ENCODE measurements at regions of chr3 and their contacts with region 1.

Region 1: GRCh38 chr3:61574854-61575253 is 13.5 kb downstream of the PTPRG start:
- DNase-seq: peak in 1 of 2 experiments; percentile 43
- H3K4me3 ChIP-seq: no peak overlapping the region
- H3K27ac ChIP-seq: no peak overlapping the region; the same call in 1 of the 2 replicates
- H3K4me1 ChIP-seq: peaks cover 3 to 44% (median 15%) of the 10 kb centered on the region in 4 experiments; a peak in 6 of 7 replicates
- H3K27me3 ChIP-seq: no peaks in the 10 kb centered on the region
- CTCF ChIP-seq: no peak
- EP300 ChIP-seq: no peak
- POLR2A ChIP-seq: no peak
- RAD21 ChIP-seq: no peak

Region 2: GRCh38 chr3:61589856-61590255 is 15.0 kb after region 1 on chr3:
- CTCF ChIA-PET with region 1: interaction called, 3 read pairs
- POLR2A ChIA-PET with region 1: interaction called, 19 read pairs
- DNase-seq: no peak
- H3K4me3 ChIP-seq: no peak overlapping the region
- H3K27ac ChIP-seq: no peak overlapping the region
- H3K4me1 ChIP-seq: peaks cover 2 to 15% (median 9%) of the 10 kb centered on the region in 4 experiments; a peak in 5 of 7 replicates
- H3K27me3 ChIP-seq: no peaks in the 10 kb centered on the region
- CTCF ChIP-seq: no peak
- EP300 ChIP-seq: no peak
- POLR2A ChIP-seq: no peak
- RAD21 ChIP-seq: no peak